CD4-positive, alpha-beta T cell (primary cell): ENCODE measurements at regions of chr6 and their contacts with region 1.

Region 1: GRCh38 chr6:138001750-138002349 is 105.4 kb downstream of the PERP start:
- DNase-seq: peak; percentile 35 to 80 (median 56)
- ATAC-seq: peak; percentile 58
- H3K4me3 ChIP-seq: no peak overlapping the region
- H3K4me3 Mint-ChIP-seq: no peak overlapping the region
- H3K27ac ChIP-seq: no peak overlapping the region
- H3K27ac Mint-ChIP-seq: no peak overlapping the region
- H3K4me1 ChIP-seq: no peaks in the 10 kb centered on the region
- H3K4me1 Mint-ChIP-seq: no peaks in the 10 kb centered on the region
- H3K27me3 ChIP-seq: no peaks in the 10 kb centered on the region
- H3K27me3 Mint-ChIP-seq: no peaks in the 10 kb centered on the region
- CTCF ChIP-seq: peak; percentile 94

Region 2: DNA sequence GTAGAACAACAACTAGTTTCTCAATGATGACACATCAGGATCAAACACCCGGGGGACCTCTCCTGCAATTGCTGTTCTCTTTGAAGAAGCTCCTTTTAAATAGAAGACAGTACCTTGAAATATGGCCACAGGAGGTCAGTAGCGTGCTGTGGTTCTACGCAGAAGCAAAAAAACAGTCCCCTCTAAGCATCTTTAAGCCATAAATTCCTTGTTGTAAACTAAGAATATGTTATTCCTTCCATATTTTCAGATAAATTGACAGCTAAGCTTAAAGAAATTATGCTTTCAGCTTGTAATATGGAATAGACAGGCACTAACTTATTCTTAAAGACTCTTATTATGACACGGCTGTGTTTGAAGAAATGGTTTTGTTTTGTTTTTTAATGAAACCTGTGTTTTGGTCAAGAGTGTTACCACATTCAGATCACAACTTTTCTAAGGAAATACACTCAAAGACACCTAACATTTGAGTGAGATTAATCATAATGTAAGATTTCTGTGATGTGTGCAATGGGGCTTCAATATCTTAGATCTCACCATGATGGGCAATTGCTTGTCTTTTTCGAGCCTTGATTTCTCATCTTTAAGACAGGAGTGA is 907.3 kb before region 1 on chr6:
- CTCF ChIA-PET with region 1: no interaction called
- POLR2A ChIA-PET with region 1: no interaction called
- intact Hi-C with region 1: loop called in 1 of 2 experiments (anchors 10 kb)
- DNase-seq: peak; percentile 22 to 80 (median 37)
- ATAC-seq: no peak
- H3K4me3 ChIP-seq: no peak overlapping the region
- H3K4me3 Mint-ChIP-seq: no peak overlapping the region
- H3K27ac ChIP-seq: no peak overlapping the region
- H3K27ac Mint-ChIP-seq: no peak overlapping the region
- H3K4me1 ChIP-seq: peaks cover 9% of the 10 kb centered on the region
- H3K4me1 Mint-ChIP-seq: peaks cover 12% of the 10 kb centered on the region
- H3K27me3 ChIP-seq: no peaks in the 10 kb centered on the region
- H3K27me3 Mint-ChIP-seq: peaks cover 5% of the 10 kb centered on the region
- CTCF ChIP-seq: peak; percentile 71

Region 3: GRCh38 chr6:138109042-138109997 is 107.5 kb after region 1 on chr6:
- CTCF ChIA-PET with region 1: interaction called, 8 read pairs
- POLR2A ChIA-PET with region 1: no interaction called
- intact Hi-C with region 1: loop called (anchors 1 kb)
- DNase-seq: peak; percentile 63 to 88 (median 78)
- ATAC-seq: peak; percentile 61
- H3K4me3 ChIP-seq: no peak overlapping the region
- H3K4me3 Mint-ChIP-seq: peak overlapping the region; percentile 47
- H3K27ac ChIP-seq: no peak overlapping the region
- H3K27ac Mint-ChIP-seq: no peak overlapping the region
- H3K4me1 ChIP-seq: peaks cover 20% of the 10 kb centered on the region
- H3K4me1 Mint-ChIP-seq: peaks cover 24% of the 10 kb centered on the region
- H3K27me3 ChIP-seq: peaks cover 9 to 26% of the 10 kb centered on the region in 2 experiments
- H3K27me3 Mint-ChIP-seq: peaks cover 52% of the 10 kb centered on the region
- CTCF ChIP-seq: peak; percentile 92

Region 4: GRCh38 chr6:138403801-138404661 is 402.2 kb after region 1 on chr6 and contains the start of gene HEBP2:
- CTCF ChIA-PET with region 1: no interaction called
- POLR2A ChIA-PET with region 1: no interaction called
- intact Hi-C with region 1: loop called in 1 of 2 experiments (anchors 10 kb)
- DNase-seq: peak; percentile 77 to 97 (median 94)
- ATAC-seq: peak; percentile 93
- H3K4me3 ChIP-seq: peak within 1 kb of the TSS; percentile 91
- H3K4me3 Mint-ChIP-seq: peak within 1 kb of the TSS; percentile 87
- H3K27ac ChIP-seq: peak within 1 kb of the TSS; percentile 61 to 75
- H3K27ac Mint-ChIP-seq: peak within 1 kb of the TSS; percentile 86
- H3K4me1 ChIP-seq: peaks cover 27% of the 10 kb centered on the region
- H3K4me1 Mint-ChIP-seq: peaks cover 21% of the 10 kb centered on the region
- H3K27me3 ChIP-seq: no peaks in the 10 kb centered on the region
- H3K27me3 Mint-ChIP-seq: no peaks in the 10 kb centered on the region
- CTCF ChIP-seq: peak; percentile 48
- total RNA-seq, gene HEBP2: 31.8 to 32.9 TPM

Region 5: DNA sequence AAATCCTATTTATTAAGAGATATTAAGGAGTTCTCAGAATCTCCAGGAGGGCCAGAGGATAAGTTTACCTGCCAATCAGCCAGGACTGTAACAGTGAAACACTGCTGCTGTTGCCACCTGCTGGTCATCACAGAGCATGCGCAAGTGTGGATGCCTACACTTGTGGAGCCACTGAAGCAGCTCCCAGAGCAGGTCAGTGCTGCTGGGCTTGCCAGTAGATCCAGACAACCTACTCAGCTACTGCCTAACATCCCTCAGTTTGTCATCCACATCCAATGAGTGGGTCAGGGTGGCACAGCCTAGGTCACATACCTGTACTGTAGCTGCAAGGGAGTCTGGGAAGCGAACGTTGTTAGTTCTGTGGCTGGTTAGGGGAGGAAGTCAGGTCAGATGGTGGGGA is 515.8 kb after region 1 on chr6:
- CTCF ChIA-PET with region 1: no interaction called
- POLR2A ChIA-PET with region 1: no interaction called
- intact Hi-C with region 1: loop called in 1 of 2 experiments (anchors 5 kb)
- DNase-seq: peak; percentile 28 to 78 (median 44)
- ATAC-seq: peak; percentile 81
- H3K4me3 ChIP-seq: no peak overlapping the region
- H3K4me3 Mint-ChIP-seq: no peak overlapping the region
- H3K27ac ChIP-seq: no peak overlapping the region
- H3K27ac Mint-ChIP-seq: no peak overlapping the region
- H3K4me1 ChIP-seq: peaks cover 6% of the 10 kb centered on the region
- H3K4me1 Mint-ChIP-seq: peaks cover 10% of the 10 kb centered on the region
- H3K27me3 ChIP-seq: no peaks in the 10 kb centered on the region
- H3K27me3 Mint-ChIP-seq: peaks cover 15% of the 10 kb centered on the region
- CTCF ChIP-seq: peak; percentile 78